PC-3 (cell line): ENCODE measurements at regions of chr9 and their contacts with region 1.

Region 1: GRCh38 chr9:92954049-92954861 is 6.9 kb downstream of the FGD3 start:
- DNase-seq: peak; percentile 91
- ATAC-seq: peak; percentile 81
- H3K4me3 ChIP-seq: peak overlapping the region; percentile 28; the same call in 1 of the 2 replicates
- H3K27ac ChIP-seq: peak overlapping the region; percentile 76
- H3K4me1 ChIP-seq: peaks cover 19% of the 10 kb centered on the region
- H3K27me3 ChIP-seq: no peaks in the 10 kb centered on the region
- CTCF ChIP-seq: no peak

Region 2: GRCh38 chr9:92877531-92878430 is 76.5 kb before region 1 on chr9 and contains the start of gene ZNF484:
- CTCF ChIA-PET with region 1: no interaction called
- POLR2A ChIA-PET with region 1: no interaction called
- intact Hi-C with region 1: loop called (anchors 5 kb)
- DNase-seq: peak; percentile 98
- ATAC-seq: peak; percentile 99
- H3K4me3 ChIP-seq: peak within 1 kb of the TSS; percentile 96
- H3K27ac ChIP-seq: 0 out of 2 replicates have a peak within 1 kb of the TSS, but pooled peaks have one; percentile 24
- H3K4me1 ChIP-seq: peaks cover 12% of the 10 kb centered on the region; the same call in 1 of the 2 replicates
- H3K27me3 ChIP-seq: no peaks in the 10 kb centered on the region
- CTCF ChIP-seq: no peak
- total RNA-seq, gene ZNF484: 3.8 and 3.9 TPM in 2 replicates

Region 3: DNA sequence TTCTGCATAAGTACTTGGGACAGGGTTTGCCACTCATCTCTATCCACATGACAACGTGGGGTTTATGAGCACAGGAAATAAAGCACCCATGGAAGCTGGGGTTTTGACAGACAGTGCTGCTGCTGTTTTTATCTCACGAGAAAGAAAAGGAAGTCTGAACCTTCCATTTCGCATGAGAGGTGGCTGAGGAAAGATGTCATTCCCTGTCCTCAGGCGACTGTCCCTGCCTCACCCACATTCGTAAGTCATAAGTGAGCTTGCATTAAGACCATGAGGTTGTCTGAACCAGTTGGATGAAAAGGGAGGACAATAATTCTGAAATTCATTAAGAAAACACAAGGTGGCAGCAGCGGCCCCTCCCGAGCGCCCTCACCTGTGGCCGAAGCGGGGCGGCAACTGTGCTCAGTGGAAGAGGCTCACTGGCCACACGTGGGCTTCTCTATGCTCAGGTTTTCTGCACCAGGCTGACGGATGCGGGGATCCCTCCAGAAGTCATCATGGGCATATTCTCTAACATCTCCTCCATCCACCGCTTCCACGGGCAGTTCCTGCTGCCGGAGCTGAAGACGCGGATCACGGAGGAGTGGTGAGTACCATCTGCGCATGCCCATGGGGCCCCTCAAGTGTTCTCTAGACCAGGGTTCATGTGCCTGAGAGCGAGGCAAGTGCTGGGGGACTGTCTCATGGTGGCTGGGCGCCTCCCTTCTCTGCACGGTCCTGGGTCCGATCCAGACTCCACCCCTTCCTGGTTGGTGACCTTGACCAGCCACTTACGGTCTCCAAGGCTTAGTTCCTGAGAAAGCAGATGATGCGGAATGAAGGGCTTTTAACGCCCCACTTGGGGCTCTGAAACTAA is 49.5 kb after region 1 on chr9:
- CTCF ChIA-PET with region 1: no interaction called
- POLR2A ChIA-PET with region 1: interaction called, 4 read pairs
- intact Hi-C with region 1: loop called (anchors 1 kb)
- DNase-seq: peak; percentile 72
- ATAC-seq: peak; percentile 94
- H3K4me3 ChIP-seq: peak overlapping the region; percentile 67
- H3K27ac ChIP-seq: no peak overlapping the region
- H3K4me1 ChIP-seq: peaks cover 4% of the 10 kb centered on the region; the same call in 1 of the 2 replicates
- H3K27me3 ChIP-seq: no peaks in the 10 kb centered on the region
- CTCF ChIP-seq: peak; percentile 75

Region 4: GRCh38 chr9:94127806-94128205 is 1173.6 kb after region 1 on chr9:
- CTCF ChIA-PET with region 1: no interaction called
- POLR2A ChIA-PET with region 1: no interaction called
- intact Hi-C with region 1: no loop called
- DNase-seq: no peak
- ATAC-seq: no peak
- H3K4me3 ChIP-seq: no peak overlapping the region
- H3K27ac ChIP-seq: no peak overlapping the region
- H3K4me1 ChIP-seq: no peaks in the 10 kb centered on the region
- H3K27me3 ChIP-seq: no peaks in the 10 kb centered on the region
- CTCF ChIP-seq: no peak